ENCODE measurements at regions of chr1 and their contacts with region 1.

Region 1: GRCh38 chr1:230917284-230918135 is 49.2 kb upstream of the C1orf198 start:
- DNase-seq: peak; percentile 75
- H3K4me3 ChIP-seq: no peak overlapping the region
- H3K27ac ChIP-seq: no peak overlapping the region
- H3K4me1 ChIP-seq: no peaks in the 10 kb centered on the region
- H3K27me3 ChIP-seq: no peaks in the 10 kb centered on the region
- CTCF ChIP-seq: peak; percentile 30 to 66 (median 44)
- EP300 ChIP-seq: no peak
- POLR2A ChIP-seq: no peak

Region 2: DNA sequence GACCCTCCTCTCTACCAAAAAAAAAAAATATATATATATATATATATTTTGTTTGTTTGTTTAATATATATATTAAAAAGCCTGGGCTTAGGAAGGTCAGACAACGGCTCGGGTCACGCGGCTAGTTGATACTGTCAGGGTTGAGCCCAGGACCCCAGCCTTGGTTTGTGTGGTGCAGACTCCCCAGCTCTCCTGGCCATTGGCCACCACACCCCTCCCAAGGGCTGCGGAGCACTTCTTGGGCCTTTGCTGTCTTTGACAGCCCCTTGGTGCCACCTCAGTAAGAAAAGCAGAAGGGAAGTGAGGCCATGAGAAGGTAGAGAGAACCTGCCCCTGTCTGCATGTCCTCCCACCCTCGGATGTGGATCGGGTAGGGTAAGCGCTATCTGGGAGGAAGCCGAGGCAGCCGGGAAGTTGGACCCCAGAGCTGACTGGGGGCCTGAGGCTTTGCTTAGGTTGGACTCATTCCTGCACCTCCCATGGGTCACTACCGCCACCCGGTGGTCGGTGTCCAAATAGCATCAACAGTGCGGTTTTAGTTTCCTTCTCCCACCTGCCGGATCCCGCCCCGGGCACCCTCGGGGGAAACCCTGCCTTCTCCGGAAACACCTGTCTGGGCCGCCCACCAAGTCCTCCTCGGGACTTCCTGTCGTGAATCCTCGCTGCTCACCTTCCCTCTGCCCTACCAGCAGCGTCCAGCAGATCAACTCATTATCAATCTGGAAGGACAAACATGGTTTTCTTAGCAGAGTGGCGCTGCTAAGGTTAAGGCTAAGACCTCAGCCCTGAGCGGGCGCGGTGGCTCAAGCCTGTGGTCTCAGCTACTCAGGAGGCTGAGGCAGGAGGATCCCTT is 293.7 kb after region 1 on chr1:
- intact Hi-C with region 1: loop called (anchors 10 kb)
- DNase-seq: peak; percentile 77
- H3K4me3 ChIP-seq: peak overlapping the region in 3 of 4 donors; percentile 31 to 43 (median 43)
- H3K27ac ChIP-seq: no peak overlapping the region
- H3K4me1 ChIP-seq: peaks cover 0 to 4% (median 2%) of the 10 kb centered on the region in 4 donors
- H3K27me3 ChIP-seq: peaks cover 0 to 13% (median 0%) of the 10 kb centered on the region in 3 donors
- CTCF ChIP-seq: peak; percentile 62 to 92 (median 78)
- EP300 ChIP-seq: no peak
- POLR2A ChIP-seq: no peak